Astrocyte of the cerebellum (primary cell): ENCODE measurements at regions of chr1 and their contacts with region 1.

Region 1: DNA sequence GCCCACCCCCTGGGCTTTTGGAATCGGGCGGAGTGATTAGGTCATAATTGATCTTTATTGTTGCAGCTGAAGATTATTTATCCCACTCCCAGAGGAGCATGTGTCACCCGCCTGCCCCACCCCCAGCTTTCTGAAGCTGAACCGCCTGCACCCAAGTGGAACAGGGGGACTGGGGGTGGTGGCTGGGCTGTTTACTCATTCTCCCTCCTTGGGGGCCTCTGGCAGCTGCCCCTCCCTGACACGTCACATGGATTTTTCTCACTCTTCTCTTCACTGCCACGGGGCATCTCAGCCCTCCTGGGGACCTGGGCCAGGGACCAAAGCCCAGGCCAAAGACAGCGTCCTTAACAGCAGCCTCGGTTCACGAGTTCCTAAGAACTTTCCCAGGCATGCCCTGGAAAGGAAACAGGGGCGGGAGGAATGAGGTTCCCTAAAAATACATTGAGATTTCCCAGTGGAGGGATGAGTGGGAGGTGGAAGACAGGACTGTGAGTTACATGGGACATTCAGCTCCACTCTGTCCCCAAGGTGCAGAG is 31.6 kb upstream of the SOX13 start:
- DNase-seq: no peak
- H3K4me3 ChIP-seq: no peak overlapping the region
- CTCF ChIP-seq: no peak

Region 2: DNA sequence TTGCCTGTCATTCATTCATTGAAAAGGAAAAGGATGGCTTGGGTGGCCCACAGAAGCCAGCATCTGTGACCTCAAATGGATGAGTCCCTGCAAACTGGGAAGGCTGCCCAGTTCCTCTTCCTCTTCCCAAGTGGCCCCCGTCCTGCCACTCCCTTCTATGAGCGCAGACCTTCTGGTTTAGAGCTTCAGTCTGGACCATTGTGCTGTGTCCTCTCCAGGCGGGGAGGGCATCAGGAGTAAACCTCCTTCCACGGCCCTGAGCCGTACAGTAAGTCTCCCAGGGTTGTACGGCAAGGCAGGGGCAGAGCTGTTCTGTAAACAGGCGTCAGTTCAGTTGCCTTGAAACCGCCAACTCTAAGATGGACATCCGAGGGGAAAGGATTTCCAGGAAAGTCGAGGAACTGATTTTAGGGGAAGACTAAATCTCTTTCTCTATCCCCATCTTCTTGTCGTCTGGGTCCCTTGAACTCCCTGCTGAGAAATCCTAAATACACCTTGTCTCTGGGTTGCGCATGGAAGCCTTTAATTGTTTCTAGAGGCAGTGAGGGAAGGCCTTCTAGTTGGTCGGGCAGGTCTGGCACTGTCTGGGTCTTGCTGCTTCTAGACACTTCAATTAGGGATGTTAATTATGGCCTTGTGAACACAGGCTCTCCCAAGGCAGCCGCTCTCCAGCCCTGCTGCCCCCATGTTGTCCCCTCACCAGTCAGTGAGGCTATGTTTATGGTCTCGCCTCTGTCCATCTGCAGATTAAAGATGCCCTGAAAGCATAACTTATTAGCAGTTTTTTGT is 53.8 kb after region 1 on chr1:
- in situ Hi-C with region 1: loop called (anchors 10 kb)
- DNase-seq: no peak
- H3K4me3 ChIP-seq: no peak overlapping the region
- CTCF ChIP-seq: no peak